ENCODE measurements at regions of chr12 and their contacts with region 1.

Region 1: GRCh38 chr12:49244176-49244575 is 20.7 kb upstream of the TUBA1C start:
- DNase-seq: no peak
- ATAC-seq: no peak
- H3K4me3 ChIP-seq: no peak overlapping the region
- H3K27ac ChIP-seq: no peak overlapping the region
- H3K4me1 ChIP-seq: peaks cover 0 to 7% of the 10 kb centered on the region in 2 experiments; a peak in 1 of 4 replicates
- H3K27me3 ChIP-seq: no peaks in the 10 kb centered on the region
- CTCF ChIP-seq: no peak
- POLR2A ChIP-seq: no peak
- RAD21 ChIP-seq: no peak

Region 2: GRCh38 chr12:49232940-49233841 is 11.0 kb before region 1 on chr12:
- CTCF ChIA-PET with region 1: interaction called, 15 read pairs
- POLR2A ChIA-PET with region 1: no interaction called
- RAD21 ChIA-PET with region 1: no interaction called
- intact Hi-C with region 1: no loop called
- DNase-seq: no peak
- ATAC-seq: no peak
- H3K4me3 ChIP-seq: no peak overlapping the region
- H3K27ac ChIP-seq: no peak overlapping the region
- H3K4me1 ChIP-seq: peaks cover 4 to 17% of the 10 kb centered on the region in 2 experiments; a peak in 3 of 4 replicates
- H3K27me3 ChIP-seq: no peaks in the 10 kb centered on the region
- CTCF ChIP-seq: no peak
- POLR2A ChIP-seq: no peak
- RAD21 ChIP-seq: no peak

Measured in HCT116 (cell line).